Activated B cell treated with CpG ODN at 0.5 μM for 24 hours (primary cell): ENCODE measurements at regions of chr5 and their contacts with region 1.

Region 1: DNA sequence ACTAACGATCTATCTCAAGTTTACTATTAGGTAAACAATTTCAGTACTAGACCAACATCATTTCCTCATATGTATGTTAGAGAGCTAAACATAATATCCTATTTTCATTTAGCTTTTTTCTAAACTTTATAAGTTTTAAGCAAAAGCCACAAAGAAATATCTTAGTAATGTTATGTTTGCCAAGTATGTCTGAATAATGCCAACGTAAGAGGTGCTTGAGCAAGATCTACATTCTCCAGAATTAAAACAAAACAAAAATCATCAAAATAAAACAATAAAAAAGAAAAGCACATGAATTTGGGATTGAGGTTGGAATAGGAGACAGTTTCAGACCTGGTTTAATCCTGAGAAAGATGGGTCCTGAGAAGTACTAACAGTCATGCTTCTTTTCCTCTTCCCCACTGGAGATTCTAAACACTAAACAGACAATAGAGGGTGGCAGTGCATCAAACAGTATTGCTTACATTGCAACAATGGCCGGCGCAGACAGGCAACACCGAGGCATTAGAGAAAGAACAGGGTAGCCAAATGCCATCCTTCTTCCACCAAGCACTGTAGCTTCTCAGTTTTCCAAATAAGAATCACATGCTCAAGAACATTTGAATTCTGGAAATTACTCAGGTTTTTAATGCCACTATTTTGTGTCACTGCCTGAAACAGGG is 33.6 kb downstream of the CSNK1A1 start:
- DNase-seq: no peak
- ATAC-seq: no peak
- H3K4me3 Mint-ChIP-seq: no peak overlapping the region
- H3K27ac Mint-ChIP-seq: no peak overlapping the region
- H3K4me1 Mint-ChIP-seq: peaks cover 28% of the 10 kb centered on the region
- H3K27me3 Mint-ChIP-seq: no peaks in the 10 kb centered on the region
- CTCF ChIP-seq: no peak

Region 2: DNA sequence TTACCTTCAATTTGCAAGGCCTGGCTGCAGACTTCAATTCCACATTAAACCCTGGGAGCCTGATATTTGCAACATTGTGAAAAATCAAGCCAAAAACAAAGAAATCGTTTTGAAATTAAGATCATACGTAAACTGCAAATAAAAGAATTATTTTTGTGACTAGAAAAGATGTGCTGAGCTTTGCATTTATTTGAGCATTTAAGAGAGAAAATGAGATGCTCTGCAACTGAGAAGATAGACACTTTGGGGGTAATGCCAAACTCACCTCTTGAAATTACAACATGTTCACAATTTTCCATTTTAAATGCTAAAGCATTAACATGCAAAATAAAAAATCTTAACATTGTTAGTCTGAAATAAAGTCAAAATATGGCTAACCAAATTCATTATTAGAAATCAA is 12.9 kb before region 1 on chr5:
- CTCF ChIA-PET with region 1: no interaction called
- POLR2A ChIA-PET with region 1: no interaction called
- intact Hi-C with region 1: loop called (anchors 2 kb)
- DNase-seq: no peak
- ATAC-seq: no peak
- H3K4me3 Mint-ChIP-seq: no peak overlapping the region
- H3K27ac Mint-ChIP-seq: no peak overlapping the region
- H3K4me1 Mint-ChIP-seq: no peaks in the 10 kb centered on the region
- H3K27me3 Mint-ChIP-seq: no peaks in the 10 kb centered on the region
- CTCF ChIP-seq: no peak